Panc1 (cell line): ENCODE measurements at regions of chr7 and their contacts with region 1.

Region 1: GRCh38 chr7:94087664-94088352 is 83.7 kb upstream of the BET1 start:
- DNase-seq: peak; percentile 54
- ATAC-seq: peak; percentile 84
- H3K4me3 ChIP-seq: peak overlapping the region in 1 of 2 experiments; percentile 23; a peak in 2 of 4 replicates
- H3K27ac ChIP-seq: no peak overlapping the region
- H3K4me1 ChIP-seq: no peaks in the 10 kb centered on the region
- H3K27me3 ChIP-seq: peaks cover 3% of the 10 kb centered on the region
- CTCF ChIP-seq: peak; percentile 81

Region 2: DNA sequence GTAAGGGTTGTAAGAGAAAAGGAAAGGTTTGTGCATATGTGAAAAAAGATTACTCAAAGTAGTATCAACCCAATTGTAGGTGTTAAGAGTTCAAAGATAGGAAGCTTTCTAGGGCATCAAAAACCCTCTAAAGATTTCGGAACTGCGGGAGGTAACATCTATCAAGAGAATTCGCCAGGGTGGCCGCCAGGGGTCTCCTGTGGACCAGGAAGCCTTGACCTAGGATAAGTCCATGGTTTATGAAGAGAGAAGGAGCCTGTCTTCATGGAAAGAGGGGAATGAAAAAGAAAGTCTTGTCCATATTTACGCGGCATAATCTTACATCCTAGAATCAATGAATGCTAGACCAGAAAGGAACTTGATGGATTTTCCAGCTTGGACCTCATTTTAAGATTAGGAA is 372.6 kb before region 1 on chr7:
- CTCF ChIA-PET with region 1: no interaction called
- POLR2A ChIA-PET with region 1: no interaction called
- in situ Hi-C with region 1: no loop called
- intact Hi-C with region 1: loop called (anchors 2 kb)
- DNase-seq: peak; percentile 12
- ATAC-seq: peak; percentile 83
- H3K4me3 ChIP-seq: no peak overlapping the region
- H3K27ac ChIP-seq: no peak overlapping the region
- H3K4me1 ChIP-seq: no peaks in the 10 kb centered on the region
- H3K27me3 ChIP-seq: 0 out of 2 replicates have a peak, but pooled peaks cover 2% of the 10 kb centered on the region
- CTCF ChIP-seq: peak; percentile 82

Region 3: DNA sequence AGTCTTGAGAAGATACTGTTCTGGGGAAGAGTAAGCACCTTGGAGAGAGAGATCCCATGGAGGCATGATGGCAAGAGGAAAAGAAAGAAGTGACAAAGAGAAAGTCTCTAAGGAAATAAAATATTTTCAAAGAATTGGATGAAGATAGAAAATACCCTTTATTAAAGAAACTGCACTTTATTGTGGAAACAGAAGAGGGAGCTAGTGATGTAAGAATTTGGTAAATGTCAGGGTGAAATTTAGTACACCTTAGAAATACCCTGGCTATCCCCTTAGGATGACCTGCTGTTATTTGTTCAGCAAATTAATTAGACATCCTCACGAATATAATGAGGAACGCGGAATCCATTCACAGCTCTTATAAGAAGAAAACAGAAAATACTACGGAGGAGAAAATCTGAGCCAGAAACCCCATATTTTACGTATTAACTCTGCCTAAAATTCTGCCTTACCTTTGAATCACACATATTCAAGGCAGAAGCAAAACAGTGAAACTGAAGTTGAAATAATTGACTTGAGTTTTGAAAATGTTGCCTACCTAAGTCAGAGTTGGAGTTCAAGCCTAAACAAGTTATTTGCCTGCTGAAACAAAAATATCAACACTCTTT is 288.0 kb before region 1 on chr7:
- CTCF ChIA-PET with region 1: no interaction called
- POLR2A ChIA-PET with region 1: no interaction called
- in situ Hi-C with region 1: no loop called
- intact Hi-C with region 1: loop called (anchors 5 kb)
- DNase-seq: peak; percentile 5
- ATAC-seq: no peak
- H3K4me3 ChIP-seq: no peak overlapping the region
- H3K27ac ChIP-seq: no peak overlapping the region
- H3K4me1 ChIP-seq: no peaks in the 10 kb centered on the region
- H3K27me3 ChIP-seq: no peaks in the 10 kb centered on the region
- CTCF ChIP-seq: peak; percentile 39; the same call in 1 of the 2 replicates

Region 4: DNA sequence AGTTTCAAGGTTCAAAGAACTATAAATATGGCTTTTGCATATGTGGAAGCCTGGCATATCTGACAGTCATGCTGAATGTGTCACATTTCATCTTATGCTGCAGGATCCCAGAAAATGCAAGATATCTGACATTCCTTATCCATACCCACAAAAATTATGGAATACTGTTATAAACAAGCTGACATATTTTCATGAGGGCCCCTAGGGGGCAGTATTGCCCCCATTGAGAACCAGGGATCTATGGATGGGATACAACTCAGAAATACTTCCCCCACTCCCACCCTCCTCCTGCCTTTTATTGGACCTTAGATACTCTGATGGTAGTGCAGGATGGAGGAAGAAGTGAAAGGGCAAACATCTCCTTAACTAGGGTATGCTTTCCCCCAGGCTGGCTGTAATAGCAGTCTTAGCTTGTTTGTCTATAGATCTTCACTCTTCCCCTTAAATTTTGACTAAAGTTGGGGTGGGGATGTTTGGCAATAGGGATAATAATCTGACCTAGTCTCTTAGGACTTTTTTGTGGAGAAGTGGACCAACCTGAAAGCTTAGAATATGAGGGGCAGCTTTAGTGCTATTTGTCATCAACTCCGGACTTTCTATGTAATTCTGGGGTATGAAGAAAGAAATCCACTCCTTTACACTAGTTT is 184.9 kb before region 1 on chr7:
- CTCF ChIA-PET with region 1: interaction called, 4 read pairs
- POLR2A ChIA-PET with region 1: no interaction called
- in situ Hi-C with region 1: no loop called
- intact Hi-C with region 1: loop called (anchors 5 kb)
- DNase-seq: no peak
- ATAC-seq: no peak
- H3K4me3 ChIP-seq: no peak overlapping the region
- H3K27ac ChIP-seq: no peak overlapping the region
- H3K4me1 ChIP-seq: no peaks in the 10 kb centered on the region
- H3K27me3 ChIP-seq: peaks cover 3% of the 10 kb centered on the region; the same call in 1 of the 2 replicates
- CTCF ChIP-seq: peak; percentile 81

Region 5: DNA sequence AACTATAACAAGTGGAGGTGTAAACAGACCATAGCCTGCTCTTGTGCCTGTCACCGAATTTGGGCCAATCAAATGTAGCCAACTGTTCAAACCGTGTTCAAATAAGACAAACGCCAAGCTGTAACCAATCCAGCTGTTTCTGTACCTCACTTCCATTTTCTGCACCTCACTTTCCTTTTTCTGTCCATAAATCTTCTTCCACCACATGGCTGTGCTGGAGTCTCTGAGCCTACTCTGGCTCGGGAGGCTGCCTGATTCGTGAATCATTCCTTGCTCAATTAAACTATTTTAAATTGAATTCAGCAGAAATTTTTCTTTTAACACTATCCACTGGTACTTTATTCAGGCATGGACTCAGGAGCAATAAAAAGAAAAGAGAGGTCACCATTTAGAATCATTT is 277.0 kb after region 1 on chr7:
- CTCF ChIA-PET with region 1: no interaction called
- POLR2A ChIA-PET with region 1: no interaction called
- in situ Hi-C with region 1: no loop called
- intact Hi-C with region 1: no loop called
- DNase-seq: no peak
- ATAC-seq: no peak
- H3K4me3 ChIP-seq: no peak overlapping the region
- H3K27ac ChIP-seq: no peak overlapping the region
- H3K4me1 ChIP-seq: no peaks in the 10 kb centered on the region
- H3K27me3 ChIP-seq: no peaks in the 10 kb centered on the region
- CTCF ChIP-seq: no peak

Region 6: GRCh38 chr7:94556028-94556427 is 468.2 kb after region 1 on chr7:
- CTCF ChIA-PET with region 1: no interaction called
- POLR2A ChIA-PET with region 1: no interaction called
- in situ Hi-C with region 1: no loop called
- intact Hi-C with region 1: no loop called
- DNase-seq: no peak
- ATAC-seq: no peak
- H3K4me3 ChIP-seq: no peak overlapping the region
- H3K27ac ChIP-seq: no peak overlapping the region
- H3K4me1 ChIP-seq: no peaks in the 10 kb centered on the region
- H3K27me3 ChIP-seq: no peaks in the 10 kb centered on the region
- CTCF ChIP-seq: no peak